ENCODE measurements at regions of chr2 and their contacts with region 1.

Region 1: DNA sequence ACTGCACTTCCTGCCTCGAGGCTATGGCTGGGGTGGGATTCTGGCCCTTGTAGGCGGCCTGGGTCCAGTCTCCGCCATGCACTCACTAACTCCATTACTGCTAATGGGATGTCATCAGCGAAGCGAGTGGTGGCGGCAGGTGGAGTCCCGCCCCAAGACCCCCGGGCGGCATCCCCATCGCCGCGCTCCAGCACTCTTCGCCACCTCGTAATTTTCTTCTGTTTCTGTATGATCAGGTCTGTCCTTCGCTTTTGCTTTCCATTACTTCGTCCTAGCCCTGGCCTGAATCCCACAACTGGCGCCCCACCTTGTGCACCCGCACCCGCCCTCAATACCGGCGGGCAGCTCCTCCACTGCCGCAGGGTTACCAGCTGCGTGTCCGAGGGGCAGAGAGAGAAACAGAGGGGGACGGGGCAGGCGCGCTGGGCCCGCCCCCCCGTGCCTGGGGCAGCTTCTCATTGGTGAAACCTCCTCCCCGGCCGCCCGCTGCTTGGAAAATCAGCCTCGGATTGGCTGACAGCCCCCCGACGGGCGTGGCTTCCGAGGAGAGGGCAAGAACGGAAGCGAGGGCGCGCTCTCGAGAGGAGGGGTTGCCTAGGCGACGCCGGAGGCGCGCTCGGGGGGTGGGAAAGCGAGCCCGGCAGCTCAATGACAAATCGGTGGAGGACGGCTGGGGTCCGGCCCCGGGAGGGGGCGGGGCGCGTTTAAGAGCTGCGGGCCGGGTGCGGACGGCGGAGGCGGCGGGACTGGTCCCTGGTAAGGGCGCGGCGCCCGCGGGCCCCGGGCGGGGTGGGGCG is at the start of gene RALB:
- DNase-seq: peak; percentile 97 to 99 (median 97)
- H3K4me3 ChIP-seq: peak within 1 kb of the TSS; percentile 78 to 80
- H3K4me3 Mint-ChIP-seq: peak within 1 kb of the TSS; percentile 99 to 100 (median 100)
- H3K27ac ChIP-seq: peak within 1 kb of the TSS; percentile 61
- H3K27ac Mint-ChIP-seq: peak within 1 kb of the TSS; percentile 87 to 99 (median 98)
- H3K4me1 ChIP-seq: peaks cover 44% of the 10 kb centered on the region
- H3K4me1 Mint-ChIP-seq: peaks cover 37 to 51% (median 43%) of the 10 kb centered on the region in 4 donors
- H3K27me3 ChIP-seq: no peaks in the 10 kb centered on the region
- H3K27me3 Mint-ChIP-seq: peaks cover 1 to 3% of the 10 kb centered on the region in 2 donors
- total RNA-seq, gene RALB: 14.0 TPM

Region 2: DNA sequence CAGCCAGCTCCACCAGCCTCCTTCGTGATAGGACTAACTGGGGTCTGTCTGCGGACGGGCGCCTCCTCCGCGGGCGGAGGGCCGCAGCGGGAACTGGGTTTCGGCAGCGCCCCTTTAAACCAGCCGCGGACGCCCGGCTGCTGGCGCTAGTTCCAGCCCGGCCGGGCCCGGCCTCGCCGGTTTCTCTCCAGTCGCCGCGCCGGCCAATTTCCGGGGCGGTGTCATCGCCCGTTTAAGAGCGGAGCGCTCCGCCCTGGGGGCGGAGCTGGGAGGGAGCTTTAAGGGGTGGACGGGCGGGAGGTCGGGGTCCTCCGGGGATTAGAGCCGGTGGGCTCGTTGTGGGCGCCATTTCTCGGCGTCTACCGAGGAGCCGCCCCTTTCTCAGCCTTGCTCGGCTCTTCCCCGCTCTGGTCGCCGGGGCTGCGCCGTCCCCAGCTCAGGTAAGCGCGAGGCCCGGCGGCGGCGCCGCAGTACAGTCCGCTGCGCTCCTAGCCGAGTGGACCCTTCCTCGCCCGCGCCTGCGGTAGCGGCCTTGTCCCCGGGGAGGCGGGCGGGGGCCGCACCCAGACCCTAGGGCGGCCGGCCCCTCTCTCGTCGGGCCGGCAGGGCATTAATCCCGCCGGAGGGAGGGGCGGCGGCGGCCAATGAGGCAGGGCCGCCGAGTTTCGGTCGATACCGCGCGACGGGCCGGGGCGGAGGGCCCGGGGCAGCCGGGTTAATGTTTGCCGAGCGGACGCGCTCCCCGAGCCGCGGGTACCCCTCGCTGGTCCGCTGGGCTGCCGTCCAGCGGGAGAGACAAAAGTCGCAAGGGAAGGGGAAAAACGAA is 239.4 kb before region 1 on chr2 and contains the start of gene EPB41L5:
- CTCF ChIA-PET with region 1: no interaction called
- POLR2A ChIA-PET with region 1: no interaction called
- intact Hi-C with region 1: loop called (anchors 10 kb)
- DNase-seq: peak; percentile 63 to 74 (median 67)
- H3K4me3 ChIP-seq: peak within 1 kb of the TSS; percentile 52 to 76
- H3K4me3 Mint-ChIP-seq: peak within 1 kb of the TSS; percentile 82 to 87 (median 84)
- H3K27ac ChIP-seq: peak within 1 kb of the TSS; percentile 55
- H3K27ac Mint-ChIP-seq: peak within 1 kb of the TSS; percentile 0 to 86 (median 70)
- H3K4me1 ChIP-seq: peaks cover 15% of the 10 kb centered on the region
- H3K4me1 Mint-ChIP-seq: peaks cover 13 to 20% (median 15%) of the 10 kb centered on the region in 4 donors
- H3K27me3 ChIP-seq: no peaks in the 10 kb centered on the region
- H3K27me3 Mint-ChIP-seq: peaks cover 0 to 2% of the 10 kb centered on the region in 2 donors
- total RNA-seq, gene EPB41L5: 5.3 to 6.2 TPM

Region 3: GRCh38 chr2:120231974-120232635 is 20.3 kb before region 1 on chr2:
- CTCF ChIA-PET with region 1: interaction called, 14 read pairs
- POLR2A ChIA-PET with region 1: interaction called, 73 read pairs
- intact Hi-C with region 1: loop called (anchors 1 kb)
- DNase-seq: peak; percentile 75 to 83 (median 79)
- H3K4me3 ChIP-seq: peak overlapping the region; percentile 69 to 91
- H3K4me3 Mint-ChIP-seq: peak overlapping the region; percentile 91 to 99 (median 92)
- H3K27ac ChIP-seq: peak overlapping the region; percentile 79
- H3K27ac Mint-ChIP-seq: peak overlapping the region; percentile 91 to 99 (median 96)
- H3K4me1 ChIP-seq: peaks cover 46% of the 10 kb centered on the region
- H3K4me1 Mint-ChIP-seq: peaks cover 27 to 61% (median 42%) of the 10 kb centered on the region in 4 donors
- H3K27me3 ChIP-seq: no peaks in the 10 kb centered on the region
- H3K27me3 Mint-ChIP-seq: no peaks in the 10 kb centered on the region

Region 4: GRCh38 chr2:120360307-120360855 is 108.0 kb after region 1 on chr2:
- CTCF ChIA-PET with region 1: no interaction called
- POLR2A ChIA-PET with region 1: no interaction called
- intact Hi-C with region 1: no loop called
- DNase-seq: no peak
- H3K4me3 ChIP-seq: no peak overlapping the region
- H3K4me3 Mint-ChIP-seq: no peak overlapping the region
- H3K27ac ChIP-seq: no peak overlapping the region
- H3K27ac Mint-ChIP-seq: no peak overlapping the region
- H3K4me1 ChIP-seq: no peaks in the 10 kb centered on the region
- H3K4me1 Mint-ChIP-seq: no peaks in the 10 kb centered on the region
- H3K27me3 ChIP-seq: no peaks in the 10 kb centered on the region
- H3K27me3 Mint-ChIP-seq: peaks cover 0 to 16% of the 10 kb centered on the region in 2 donors